Activated CD4-positive, alpha-beta T cell treated with anti-CD3 and anti-CD28 coated beads for 36 hours (primary cell): ENCODE measurements at regions of chr6 and their contacts with region 1.

Region 1: GRCh38 chr6:113858480-113859348 is 1.6 kb downstream of the MARCKS start:
- DNase-seq: peak; percentile 89
- ATAC-seq: peak; percentile 95
- H3K4me3 Mint-ChIP-seq: no peak overlapping the region
- H3K27ac Mint-ChIP-seq: no peak overlapping the region
- H3K4me1 Mint-ChIP-seq: peaks cover 13% of the 10 kb centered on the region
- H3K27me3 Mint-ChIP-seq: peaks cover 32% of the 10 kb centered on the region

Region 2: DNA sequence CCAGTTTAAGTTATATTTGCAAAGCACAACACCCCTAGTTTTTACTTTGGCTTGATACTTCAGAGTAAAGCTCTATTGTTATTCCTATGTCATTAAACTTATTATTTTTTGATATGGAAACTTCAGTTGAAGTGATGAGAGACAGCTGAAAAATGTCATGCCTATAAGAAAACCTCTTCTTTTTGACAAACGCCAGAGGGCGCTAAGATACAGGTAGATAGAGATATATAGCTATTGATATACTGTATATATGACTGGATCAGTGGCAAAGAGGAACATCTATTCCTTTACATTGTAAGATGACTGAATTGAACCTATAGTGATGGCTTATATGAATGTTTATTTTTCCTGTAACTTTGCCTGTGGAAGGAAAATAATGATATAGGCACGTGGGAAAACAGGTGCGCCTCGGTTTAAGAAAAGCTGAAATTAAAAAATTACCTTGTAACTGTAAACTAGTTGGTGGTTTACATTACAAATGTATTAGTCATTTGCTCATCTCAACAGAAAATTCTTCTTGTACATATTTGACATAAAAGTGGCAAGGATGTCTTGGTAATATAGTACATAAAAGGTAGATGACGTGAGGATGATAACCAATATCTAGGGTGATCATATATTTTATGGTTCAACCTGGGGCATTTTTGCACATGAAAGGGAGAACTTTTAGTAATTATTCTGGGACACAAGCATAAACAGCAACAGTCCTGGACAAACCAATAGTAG is 1678.5 kb before region 1 on chr6:
- CTCF ChIA-PET with region 1: interaction called, 3 read pairs
- POLR2A ChIA-PET with region 1: no interaction called
- intact Hi-C with region 1: loop called (anchors 1 to 2 kb)
- DNase-seq: peak; percentile 60
- ATAC-seq: peak; percentile 76
- H3K4me3 Mint-ChIP-seq: no peak overlapping the region
- H3K27ac Mint-ChIP-seq: no peak overlapping the region
- H3K4me1 Mint-ChIP-seq: no peaks in the 10 kb centered on the region
- H3K27me3 Mint-ChIP-seq: peaks cover 13% of the 10 kb centered on the region

Region 3: DNA sequence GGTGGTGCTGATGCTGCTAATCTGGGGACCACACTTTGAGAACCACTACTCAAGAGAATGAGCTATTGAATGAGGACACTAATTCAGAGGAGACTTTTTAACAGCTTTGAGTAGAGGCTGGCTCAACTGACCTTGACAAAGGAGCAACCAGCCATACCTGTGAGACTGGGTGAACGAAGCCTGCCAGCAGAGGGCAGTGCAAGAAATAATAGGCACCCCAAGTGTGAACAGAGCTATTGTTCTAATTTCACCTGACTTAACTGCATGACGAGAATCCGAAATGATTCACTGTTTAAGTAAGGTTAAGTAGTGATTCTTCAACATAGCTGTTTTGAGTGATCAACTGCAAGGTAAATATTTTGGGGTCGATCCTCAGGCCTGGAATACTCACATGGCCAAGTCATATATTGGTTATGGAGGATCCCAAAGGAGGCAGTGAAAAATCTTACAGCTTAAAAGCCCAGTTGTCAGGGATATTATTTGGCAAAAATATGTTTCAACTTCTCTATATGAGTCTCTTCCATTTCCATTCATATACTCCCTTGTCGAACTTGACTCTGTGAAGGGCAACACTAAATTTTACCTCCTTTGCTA is 552.1 kb before region 1 on chr6:
- CTCF ChIA-PET with region 1: interaction called, 11 read pairs
- POLR2A ChIA-PET with region 1: no interaction called
- intact Hi-C with region 1: loop called (anchors 1 kb)
- DNase-seq: peak; percentile 73
- ATAC-seq: peak; percentile 76
- H3K4me3 Mint-ChIP-seq: no peak overlapping the region
- H3K27ac Mint-ChIP-seq: no peak overlapping the region
- H3K4me1 Mint-ChIP-seq: no peaks in the 10 kb centered on the region
- H3K27me3 Mint-ChIP-seq: no peaks in the 10 kb centered on the region

Region 4: DNA sequence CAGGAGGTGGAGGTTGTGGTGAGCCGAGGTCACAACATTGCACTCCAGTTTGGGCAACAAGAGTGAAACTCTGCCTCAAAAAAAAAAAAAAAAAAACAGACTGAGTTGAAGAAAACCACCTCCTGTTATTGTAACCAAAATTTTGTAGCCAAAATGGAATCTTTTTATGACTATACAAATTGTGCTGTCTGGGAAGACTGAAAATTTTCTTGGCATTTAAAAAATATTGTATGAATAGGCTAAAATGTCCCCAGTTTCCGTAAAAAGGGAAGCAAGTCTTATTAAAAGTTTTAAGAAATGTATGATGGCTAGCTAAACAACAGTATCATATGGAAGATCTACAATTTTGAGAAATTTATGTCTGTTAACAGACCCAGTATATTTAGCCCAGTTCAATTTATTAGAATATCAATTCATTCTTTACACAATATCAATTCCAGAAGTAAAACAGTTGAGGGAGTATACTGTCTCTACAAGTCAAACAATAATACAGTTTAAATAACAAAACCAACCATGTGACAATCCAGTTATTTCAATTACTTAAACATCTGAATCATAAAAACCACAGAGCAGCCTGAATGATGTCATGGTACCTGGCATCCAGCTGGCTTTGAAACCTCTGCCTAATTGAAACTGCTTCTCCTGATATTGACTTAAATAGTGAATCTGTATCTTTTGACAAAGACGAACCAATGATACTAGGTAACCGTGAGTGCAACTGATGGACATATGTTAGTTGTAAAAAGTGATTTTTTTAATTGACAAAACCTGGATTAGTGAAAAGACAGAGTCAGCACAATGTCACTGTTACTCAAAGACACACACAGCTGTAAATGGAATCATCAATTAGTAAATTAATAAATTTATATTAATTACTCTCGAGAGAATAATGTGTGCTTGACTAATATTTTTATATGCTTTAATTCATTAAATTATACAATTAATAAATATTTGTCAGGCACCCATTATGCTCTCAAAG is 168.1 kb before region 1 on chr6:
- CTCF ChIA-PET with region 1: no interaction called
- POLR2A ChIA-PET with region 1: no interaction called
- intact Hi-C with region 1: loop called in 1 of 2 experiments (anchors 2 kb)
- DNase-seq: peak; percentile 42
- ATAC-seq: peak; percentile 65
- H3K4me3 Mint-ChIP-seq: no peak overlapping the region
- H3K27ac Mint-ChIP-seq: no peak overlapping the region
- H3K4me1 Mint-ChIP-seq: peaks cover 3% of the 10 kb centered on the region
- H3K27me3 Mint-ChIP-seq: no peaks in the 10 kb centered on the region

Region 5: DNA sequence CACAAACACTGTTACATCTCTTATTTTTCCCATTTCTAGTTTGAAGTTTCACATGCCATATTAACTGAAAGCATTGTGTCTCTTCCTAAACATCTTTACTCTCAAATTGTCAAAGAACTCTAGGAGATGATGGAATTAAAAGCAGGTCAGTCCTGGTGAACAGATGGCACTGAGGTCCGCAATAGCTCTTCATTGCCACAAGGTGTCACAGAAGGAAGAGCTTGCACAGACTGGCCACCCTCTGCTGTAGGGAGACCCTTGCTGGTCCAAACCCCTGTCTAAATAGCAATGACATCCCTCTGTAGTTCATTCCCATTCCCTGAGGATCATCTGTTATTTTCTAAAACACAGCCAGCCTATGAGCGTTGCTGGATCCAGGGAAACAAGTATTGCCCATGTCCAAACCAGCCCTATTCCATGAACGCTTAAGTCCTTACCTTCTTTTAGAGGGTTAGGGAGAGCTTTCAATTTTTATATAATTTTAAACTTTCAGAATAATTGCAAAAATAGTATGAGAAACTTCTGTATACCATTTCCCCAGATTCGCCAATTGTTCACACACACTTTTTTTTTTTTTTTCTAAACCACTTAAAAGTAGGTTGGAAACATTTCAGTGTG is 122.3 kb after region 1 on chr6:
- CTCF ChIA-PET with region 1: no interaction called
- POLR2A ChIA-PET with region 1: no interaction called
- intact Hi-C with region 1: no loop called
- DNase-seq: peak; percentile 29
- ATAC-seq: peak; percentile 57
- H3K4me3 Mint-ChIP-seq: no peak overlapping the region
- H3K27ac Mint-ChIP-seq: no peak overlapping the region
- H3K4me1 Mint-ChIP-seq: no peaks in the 10 kb centered on the region
- H3K27me3 Mint-ChIP-seq: no peaks in the 10 kb centered on the region